ENCODE measurements at regions of chr21 and their contacts with region 1.

Region 1: DNA sequence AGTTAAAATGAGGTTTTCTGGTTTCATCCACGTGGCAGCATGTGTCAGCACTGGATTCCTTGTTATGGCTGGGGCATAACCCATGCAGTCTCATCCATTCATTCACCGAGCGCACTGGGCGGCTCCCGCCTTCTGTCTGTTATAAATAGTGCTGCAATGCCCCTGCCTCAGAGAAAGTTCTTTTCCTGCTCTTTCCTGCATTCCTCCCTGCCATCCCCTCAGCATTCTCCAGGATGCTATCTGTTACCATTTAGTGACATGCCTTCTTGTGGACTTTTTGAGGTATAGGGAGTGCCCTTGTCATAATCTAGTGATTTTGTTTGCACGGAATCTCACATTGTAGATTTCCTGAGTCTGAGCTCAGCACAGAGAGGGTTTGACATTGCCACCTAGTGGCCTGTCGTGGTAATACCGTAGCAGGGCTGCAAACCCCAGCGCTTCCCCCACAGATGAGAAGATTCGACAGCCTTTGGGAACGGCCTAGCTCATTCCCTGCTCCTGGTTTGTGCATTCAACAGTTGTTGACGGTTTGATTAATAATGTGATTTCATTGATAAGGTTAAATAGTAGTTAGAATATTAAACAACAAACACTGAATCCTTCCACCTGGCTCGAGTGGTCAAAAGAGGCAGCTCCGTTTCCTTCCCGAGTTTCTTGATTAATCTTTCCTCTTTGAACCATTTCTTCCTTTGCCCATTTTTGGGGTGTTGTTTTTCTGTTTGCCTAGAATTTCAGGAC is 46.3 kb downstream of the UMODL1 start:
- DNase-seq: peak; percentile 66 to 71 (median 70)
- ATAC-seq: peak; percentile 78 to 84 (median 82)
- H3K4me3 ChIP-seq: no peak overlapping the region
- H3K27ac ChIP-seq: no peak overlapping the region
- H3K4me1 ChIP-seq: peaks cover 0 to 10% (median 2%) of the 10 kb centered on the region in 4 donors
- H3K27me3 ChIP-seq: peaks cover 0 to 6% of the 10 kb centered on the region in 2 donors
- CTCF ChIP-seq: peak; percentile 93 to 98 (median 96)
- POLR2A ChIP-seq: no peak

Region 2: GRCh38 chr21:41816220-41817165 is 300.9 kb before region 1 on chr21:
- intact Hi-C with region 1: loop called (anchors 5 kb)
- DNase-seq: peak; percentile 66 to 81 (median 71)
- ATAC-seq: peak; percentile 84 to 94 (median 91)
- H3K4me3 ChIP-seq: no peak overlapping the region
- H3K27ac ChIP-seq: no peak overlapping the region
- H3K4me1 ChIP-seq: no peaks in the 10 kb centered on the region
- H3K27me3 ChIP-seq: no peaks in the 10 kb centered on the region
- CTCF ChIP-seq: peak; percentile 73 to 80 (median 76)
- POLR2A ChIP-seq: no peak

Region 3: GRCh38 chr21:41823166-41823565 is 294.2 kb before region 1 on chr21:
- intact Hi-C with region 1: loop called (anchors 5 kb)
- DNase-seq: peak in 1 of 3 donors; percentile 28
- ATAC-seq: no peak
- H3K4me3 ChIP-seq: no peak overlapping the region
- H3K27ac ChIP-seq: no peak overlapping the region
- H3K4me1 ChIP-seq: no peaks in the 10 kb centered on the region
- H3K27me3 ChIP-seq: no peaks in the 10 kb centered on the region
- CTCF ChIP-seq: no peak
- POLR2A ChIP-seq: no peak

Region 4: GRCh38 chr21:42009831-42010523 is 107.4 kb before region 1 on chr21 and contains the start of gene ZBTB21:
- intact Hi-C with region 1: loop called in 1 of 2 experiments (anchors 10 kb)
- DNase-seq: peak; percentile 99
- ATAC-seq: peak; percentile 88 to 93 (median 90)
- H3K4me3 ChIP-seq: peak within 1 kb of the TSS; percentile 80 to 85 (median 84)
- H3K27ac ChIP-seq: peak within 1 kb of the TSS; percentile 96 to 99 (median 99)
- H3K4me1 ChIP-seq: peaks cover 0 to 14% (median 4%) of the 10 kb centered on the region in 4 donors
- H3K27me3 ChIP-seq: no peaks in the 10 kb centered on the region
- CTCF ChIP-seq: no peak
- POLR2A ChIP-seq: peak; percentile 96
- total RNA-seq, gene ZBTB21: 3.0 to 28.5 (median 11.2) TPM

Region 5: GRCh38 chr21:42062236-42063022 is 55.0 kb before region 1 on chr21:
- intact Hi-C with region 1: loop called in 1 of 2 experiments (anchors 10 kb)
- DNase-seq: peak in 1 of 3 donors; percentile 64
- ATAC-seq: peak in 2 of 4 donors; percentile 1 to 7
- H3K4me3 ChIP-seq: no peak overlapping the region
- H3K27ac ChIP-seq: no peak overlapping the region
- H3K4me1 ChIP-seq: peaks cover 0 to 32% (median 19%) of the 10 kb centered on the region in 4 donors
- H3K27me3 ChIP-seq: peaks cover 0 to 3% of the 10 kb centered on the region in 2 donors
- CTCF ChIP-seq: no peak
- POLR2A ChIP-seq: no peak